ENCODE measurements at regions of chr12 and their contacts with region 1.

Region 1: GRCh38 chr12:65556681-65557437 is 267.4 kb upstream of the HMGA2 start:
- DNase-seq: peak; percentile 88
- H3K4me3 ChIP-seq: no peak overlapping the region
- H3K27ac ChIP-seq: peak overlapping the region; percentile 47
- H3K4me1 ChIP-seq: peaks cover 17% of the 10 kb centered on the region
- H3K27me3 ChIP-seq: no peaks in the 10 kb centered on the region
- CTCF ChIP-seq: peak; percentile 88 to 96
- POLR2A ChIP-seq: no peak

Region 2: GRCh38 chr12:65536876-65537661 is 19.8 kb before region 1 on chr12:
- CTCF ChIA-PET with region 1: interaction called, 15 read pairs
- POLR2A ChIA-PET with region 1: no interaction called
- dilution Hi-C with region 1: no loop called
- intact Hi-C with region 1: loop called (anchors 2 kb)
- DNase-seq: peak; percentile 94
- H3K4me3 ChIP-seq: no peak overlapping the region
- H3K27ac ChIP-seq: peak overlapping the region; percentile 98
- H3K4me1 ChIP-seq: peaks cover 58% of the 10 kb centered on the region
- H3K27me3 ChIP-seq: no peaks in the 10 kb centered on the region
- CTCF ChIP-seq: no peak
- POLR2A ChIP-seq: peak; percentile 45

Region 3: GRCh38 chr12:65673732-65674131 is 116.9 kb after region 1 on chr12:
- CTCF ChIA-PET with region 1: interaction called, 33 read pairs
- POLR2A ChIA-PET with region 1: no interaction called
- dilution Hi-C with region 1: no loop called
- intact Hi-C with region 1: loop called (anchors 2 kb)
- DNase-seq: peak; percentile 50
- H3K4me3 ChIP-seq: no peak overlapping the region
- H3K27ac ChIP-seq: no peak overlapping the region
- H3K4me1 ChIP-seq: peaks cover 12% of the 10 kb centered on the region
- H3K27me3 ChIP-seq: no peaks in the 10 kb centered on the region
- CTCF ChIP-seq: peak in 1 of 2 donors; percentile 2
- POLR2A ChIP-seq: no peak

Region 4: DNA sequence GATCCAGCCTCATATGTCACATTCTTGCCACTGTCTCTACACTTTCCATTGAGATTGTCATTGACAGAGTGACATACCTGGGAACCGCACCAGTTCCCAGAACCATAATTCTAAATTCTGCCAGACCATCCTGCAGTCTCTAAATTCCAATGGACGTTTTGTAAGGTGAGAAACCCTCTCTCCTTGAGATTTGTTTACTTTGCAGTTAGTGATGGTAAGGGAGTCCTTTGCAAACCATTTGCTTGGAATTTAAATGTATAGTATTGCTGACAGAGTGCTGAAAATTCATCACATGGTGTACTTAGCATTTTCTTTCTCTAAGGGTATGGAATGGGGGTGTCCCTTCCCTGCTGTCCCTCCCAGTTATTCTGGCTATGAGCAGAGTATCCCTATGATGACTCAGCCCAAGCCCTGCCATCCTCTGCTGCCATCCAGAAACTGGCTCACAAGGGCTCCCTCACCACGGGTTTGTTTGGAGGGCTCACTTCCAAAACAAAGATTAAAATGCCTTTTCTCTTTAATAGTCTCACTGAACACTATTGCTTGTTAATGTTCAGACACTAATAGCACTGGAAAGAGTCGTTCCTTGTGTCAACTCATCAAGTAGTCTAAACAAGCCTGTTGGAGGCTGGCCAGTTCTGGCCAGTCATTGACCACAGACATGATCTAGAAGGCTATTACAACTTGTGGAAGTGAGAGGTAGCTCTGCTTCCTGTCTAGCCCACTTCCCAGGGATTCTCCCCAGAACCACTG is 138.4 kb after region 1 on chr12:
- CTCF ChIA-PET with region 1: interaction called, 19 read pairs
- POLR2A ChIA-PET with region 1: no interaction called
- dilution Hi-C with region 1: no loop called
- intact Hi-C with region 1: no loop called
- DNase-seq: peak; percentile 94
- H3K4me3 ChIP-seq: no peak overlapping the region
- H3K27ac ChIP-seq: peak overlapping the region; percentile 88
- H3K4me1 ChIP-seq: peaks cover 31% of the 10 kb centered on the region
- H3K27me3 ChIP-seq: no peaks in the 10 kb centered on the region
- CTCF ChIP-seq: no peak
- POLR2A ChIP-seq: peak; percentile 35

Region 5: GRCh38 chr12:65881965-65882413 is 325.1 kb after region 1 on chr12:
- CTCF ChIA-PET with region 1: interaction called, 13 read pairs
- POLR2A ChIA-PET with region 1: no interaction called
- dilution Hi-C with region 1: no loop called
- intact Hi-C with region 1: loop called (anchors 2 kb)
- DNase-seq: peak; percentile 91
- H3K4me3 ChIP-seq: peak overlapping the region in 2 of 3 experiments; percentile 0 to 16
- H3K27ac ChIP-seq: peak overlapping the region; percentile 70
- H3K4me1 ChIP-seq: peaks cover 93% of the 10 kb centered on the region
- H3K27me3 ChIP-seq: no peaks in the 10 kb centered on the region
- CTCF ChIP-seq: peak; percentile 32 to 53
- POLR2A ChIP-seq: no peak

Region 6: GRCh38 chr12:66035288-66035966 is 478.6 kb after region 1 on chr12:
- CTCF ChIA-PET with region 1: interaction called, 14 read pairs
- POLR2A ChIA-PET with region 1: no interaction called
- dilution Hi-C with region 1: no loop called
- intact Hi-C with region 1: loop called (anchors 1 kb)
- DNase-seq: peak; percentile 71
- H3K4me3 ChIP-seq: no peak overlapping the region
- H3K27ac ChIP-seq: no peak overlapping the region
- H3K4me1 ChIP-seq: peaks cover 10% of the 10 kb centered on the region
- H3K27me3 ChIP-seq: peaks cover 1 to 3% of the 10 kb centered on the region in 2 experiments
- CTCF ChIP-seq: peak; percentile 26 to 35
- POLR2A ChIP-seq: no peak

Region 7: GRCh38 chr12:66107451-66107915 is 550.6 kb after region 1 on chr12:
- CTCF ChIA-PET with region 1: interaction called, 5 read pairs
- POLR2A ChIA-PET with region 1: no interaction called
- dilution Hi-C with region 1: no loop called
- intact Hi-C with region 1: loop called (anchors 1 kb)
- DNase-seq: peak; percentile 89
- H3K4me3 ChIP-seq: no peak overlapping the region
- H3K27ac ChIP-seq: no peak overlapping the region
- H3K4me1 ChIP-seq: peaks cover 2% of the 10 kb centered on the region
- H3K27me3 ChIP-seq: peaks cover 9 to 17% of the 10 kb centered on the region in 2 experiments
- CTCF ChIP-seq: peak; percentile 56 to 70
- POLR2A ChIP-seq: no peak

Measured in endothelial cell of umbilical vein (primary cell).